Heart left ventricle (tissue), 16 donors: ENCODE measurements at regions of chr5 and their contacts with region 1.

Region 1: GRCh38 chr5:72955768-72956323 is at the start of gene FCHO2:
- DNase-seq: peak; percentile 98 to 100 (median 99)
- ATAC-seq: peak; percentile 93 to 97 (median 96)
- H3K4me3 ChIP-seq: peak within 1 kb of the TSS; percentile 67 to 89 (median 83)
- H3K27ac ChIP-seq: peak within 1 kb of the TSS; percentile 90 to 99 (median 96)
- H3K4me1 ChIP-seq: peaks cover 0 to 63% (median 25%) of the 10 kb centered on the region in 12 donors
- H3K27me3 ChIP-seq: no peaks in the 10 kb centered on the region
- CTCF ChIP-seq: peak; percentile 77 to 95 (median 88)
- POLR2A ChIP-seq: peak in 1 of 2 donors; percentile 71
- total RNA-seq, gene FCHO2: 10.9 to 35.3 (median 19.3) TPM

Region 2: GRCh38 chr5:72938206-72938605 is 17.6 kb before region 1 on chr5:
- intact Hi-C with region 1: loop called in 1 of 10 experiments (anchors 2 kb)
- DNase-seq: peak in 1 of 5 donors; percentile 17
- ATAC-seq: peak; percentile 29 to 91 (median 86)
- H3K4me3 ChIP-seq: no peak overlapping the region
- H3K27ac ChIP-seq: peak overlapping the region in 11 of 12 donors; percentile 46 to 87 (median 58)
- H3K4me1 ChIP-seq: peaks cover 0 to 46% (median 7%) of the 10 kb centered on the region in 12 donors
- H3K27me3 ChIP-seq: no peaks in the 10 kb centered on the region
- CTCF ChIP-seq: no peak
- POLR2A ChIP-seq: no peak